SK-N-SH (cell line): ENCODE measurements at regions of chr7 and their contacts with region 1.

Region 1: GRCh38 chr7:132580717-132581285 is 4.5 kb upstream of the PLXNA4 start:
- DNase-seq: peak; percentile 84
- H3K4me3 ChIP-seq: no peak overlapping the region
- H3K27ac ChIP-seq: no peak overlapping the region
- H3K4me1 ChIP-seq: peaks cover 0 to 17% of the 10 kb centered on the region in 2 experiments; a peak in 2 of 4 replicates
- H3K27me3 ChIP-seq: peaks cover 13% of the 10 kb centered on the region; the same call in 1 of the 2 replicates
- CTCF ChIP-seq: peak; percentile 96
- EP300 ChIP-seq: 0 out of 4 replicates have a peak, but pooled peaks of 1 of the 2 experiments have one; percentile 23
- RAD21 ChIP-seq: peak; percentile 98

Region 2: GRCh38 chr7:131859147-131859821 is 721.5 kb before region 1 on chr7:
- CTCF ChIA-PET with region 1: interaction called, 15 read pairs
- POLR2A ChIA-PET with region 1: no interaction called
- DNase-seq: peak; percentile 80
- H3K4me3 ChIP-seq: peak overlapping the region in 1 of 2 experiments; percentile 15; a peak in 1 of 4 replicates
- H3K27ac ChIP-seq: peak overlapping the region in 1 of 2 experiments; percentile 76; a peak in 3 of 4 replicates
- H3K4me1 ChIP-seq: peaks cover 7 to 30% of the 10 kb centered on the region in 2 experiments; a peak in 3 of 4 replicates
- H3K27me3 ChIP-seq: no peaks in the 10 kb centered on the region
- CTCF ChIP-seq: peak; percentile 99
- EP300 ChIP-seq: no peak
- RAD21 ChIP-seq: peak; percentile 86

Region 3: GRCh38 chr7:132386201-132386681 is 194.6 kb before region 1 on chr7:
- CTCF ChIA-PET with region 1: interaction called, 121 read pairs
- POLR2A ChIA-PET with region 1: no interaction called
- DNase-seq: peak; percentile 72
- H3K4me3 ChIP-seq: no peak overlapping the region
- H3K27ac ChIP-seq: peak overlapping the region in 1 of 2 experiments; percentile 86; a peak in 2 of 4 replicates
- H3K4me1 ChIP-seq: peaks cover 0 to 60% of the 10 kb centered on the region in 2 experiments; a peak in 2 of 4 replicates
- H3K27me3 ChIP-seq: no peaks in the 10 kb centered on the region
- CTCF ChIP-seq: no peak
- EP300 ChIP-seq: peak in 1 of 2 experiments; percentile 59; a peak in 2 of 4 replicates
- RAD21 ChIP-seq: no peak; the same call in 1 of the 2 replicates

Region 4: GRCh38 chr7:132472463-132473120 is 108.2 kb before region 1 on chr7:
- CTCF ChIA-PET with region 1: interaction called, 12 read pairs
- POLR2A ChIA-PET with region 1: no interaction called
- DNase-seq: peak; percentile 77
- H3K4me3 ChIP-seq: no peak overlapping the region
- H3K27ac ChIP-seq: peak overlapping the region in 1 of 2 experiments; percentile 63; a peak in 3 of 4 replicates
- H3K4me1 ChIP-seq: peaks cover 14 to 60% of the 10 kb centered on the region in 2 experiments; a peak in 3 of 4 replicates
- H3K27me3 ChIP-seq: peaks cover 3% of the 10 kb centered on the region; the same call in 1 of the 2 replicates
- CTCF ChIP-seq: no peak
- EP300 ChIP-seq: peak in 1 of 2 experiments; percentile 84; a peak in 2 of 4 replicates
- RAD21 ChIP-seq: peak; percentile 29; the same call in 1 of the 2 replicates

Region 5: DNA sequence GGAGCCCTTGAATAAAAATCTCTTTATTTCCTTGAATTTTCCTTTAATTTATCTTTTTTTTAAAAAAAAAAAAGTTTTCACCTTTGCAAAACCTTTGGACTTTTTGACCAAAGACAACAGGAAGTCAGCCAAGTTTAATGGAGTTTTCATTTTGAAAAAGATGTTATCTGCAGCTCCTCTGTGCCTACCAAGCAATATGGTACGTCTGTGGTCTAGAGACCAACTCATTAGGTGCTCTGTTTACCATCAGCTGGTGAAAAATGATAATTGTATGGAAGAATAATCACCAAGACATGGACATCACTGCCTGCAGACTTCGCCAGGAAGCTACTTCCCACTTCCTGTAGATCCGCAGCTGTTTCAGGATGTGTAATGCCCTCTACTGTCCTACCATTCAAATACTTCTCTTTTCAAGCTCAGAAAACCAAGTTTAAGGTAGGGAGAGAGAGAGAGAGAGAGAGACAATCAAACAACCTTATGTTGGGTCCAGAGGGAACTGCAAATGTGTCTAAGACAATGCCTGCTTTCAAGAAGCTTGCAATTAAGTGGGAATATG is 23.2 kb before region 1 on chr7:
- CTCF ChIA-PET with region 1: interaction called, 22 read pairs
- POLR2A ChIA-PET with region 1: no interaction called
- DNase-seq: no peak
- H3K4me3 ChIP-seq: no peak overlapping the region
- H3K27ac ChIP-seq: no peak overlapping the region
- H3K4me1 ChIP-seq: peaks cover 0 to 7% of the 10 kb centered on the region in 2 experiments; a peak in 1 of 4 replicates
- H3K27me3 ChIP-seq: no peaks in the 10 kb centered on the region
- CTCF ChIP-seq: peak; percentile 46
- EP300 ChIP-seq: no peak
- RAD21 ChIP-seq: peak; percentile 72